ENCODE measurements at regions of chr5 and their contacts with region 1.

Region 1: DNA sequence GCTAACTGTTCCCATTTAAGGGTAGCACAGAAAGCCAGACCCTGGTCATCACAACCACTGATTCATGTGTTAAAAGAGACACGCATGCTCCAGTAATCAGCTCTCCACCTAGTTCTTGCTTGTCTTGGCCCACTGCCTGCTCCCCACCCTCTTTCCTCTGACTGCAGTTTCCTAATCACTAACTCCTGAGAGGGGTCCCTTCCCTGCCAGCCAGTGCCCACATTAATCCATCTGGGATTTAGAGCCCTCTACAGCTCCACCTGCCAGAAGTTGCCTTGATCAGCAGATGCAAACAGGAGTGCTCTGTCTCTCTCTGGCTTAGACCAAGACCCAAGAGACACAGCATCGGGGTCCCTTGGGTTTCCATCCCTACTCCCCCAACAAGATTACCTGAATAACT is 382.3 kb downstream of the TMEM167A start:
- DNase-seq: no peak
- H3K4me3 Mint-ChIP-seq: no peak overlapping the region
- H3K27ac Mint-ChIP-seq: no peak overlapping the region
- H3K4me1 Mint-ChIP-seq: no peaks in the 10 kb centered on the region
- H3K27me3 Mint-ChIP-seq: peaks cover 7% of the 10 kb centered on the region

Region 2: DNA sequence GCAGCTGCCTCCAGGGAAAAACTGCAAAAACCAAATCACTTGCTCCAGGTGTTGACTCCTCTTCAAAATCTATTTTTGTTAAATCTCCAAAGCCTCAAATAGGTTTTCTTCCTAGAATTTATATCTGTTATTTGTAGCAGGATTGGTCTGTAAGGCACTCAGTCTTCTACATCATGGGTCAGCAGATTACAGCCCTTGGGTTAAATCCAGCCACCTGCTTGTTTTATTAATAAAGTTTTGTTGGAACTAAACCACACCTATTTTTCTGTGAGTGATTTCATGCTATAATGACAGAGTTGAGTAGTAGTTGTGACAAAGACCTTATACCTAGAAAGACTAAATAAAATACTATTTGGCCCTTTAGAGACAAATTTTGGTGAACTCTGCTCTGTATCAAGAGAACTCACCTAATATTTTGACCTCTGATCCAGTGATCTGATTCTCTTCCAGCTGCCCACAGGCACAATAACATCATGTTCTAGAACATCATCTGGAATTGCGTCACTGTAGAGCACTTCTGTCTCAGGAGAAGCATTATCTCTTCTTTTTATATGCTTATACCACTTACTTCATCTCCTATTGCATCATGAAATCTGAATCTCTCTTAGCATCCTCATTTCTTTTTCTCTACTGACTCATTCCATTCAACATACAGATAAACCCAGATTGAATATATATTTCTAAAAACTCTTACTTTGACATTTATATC is 546.9 kb before region 1 on chr5:
- intact Hi-C with region 1: loop called (anchors 5 kb)
- DNase-seq: no peak
- H3K4me3 Mint-ChIP-seq: no peak overlapping the region
- H3K27ac Mint-ChIP-seq: no peak overlapping the region
- H3K4me1 Mint-ChIP-seq: no peaks in the 10 kb centered on the region
- H3K27me3 Mint-ChIP-seq: peaks cover 2% of the 10 kb centered on the region

Region 3: DNA sequence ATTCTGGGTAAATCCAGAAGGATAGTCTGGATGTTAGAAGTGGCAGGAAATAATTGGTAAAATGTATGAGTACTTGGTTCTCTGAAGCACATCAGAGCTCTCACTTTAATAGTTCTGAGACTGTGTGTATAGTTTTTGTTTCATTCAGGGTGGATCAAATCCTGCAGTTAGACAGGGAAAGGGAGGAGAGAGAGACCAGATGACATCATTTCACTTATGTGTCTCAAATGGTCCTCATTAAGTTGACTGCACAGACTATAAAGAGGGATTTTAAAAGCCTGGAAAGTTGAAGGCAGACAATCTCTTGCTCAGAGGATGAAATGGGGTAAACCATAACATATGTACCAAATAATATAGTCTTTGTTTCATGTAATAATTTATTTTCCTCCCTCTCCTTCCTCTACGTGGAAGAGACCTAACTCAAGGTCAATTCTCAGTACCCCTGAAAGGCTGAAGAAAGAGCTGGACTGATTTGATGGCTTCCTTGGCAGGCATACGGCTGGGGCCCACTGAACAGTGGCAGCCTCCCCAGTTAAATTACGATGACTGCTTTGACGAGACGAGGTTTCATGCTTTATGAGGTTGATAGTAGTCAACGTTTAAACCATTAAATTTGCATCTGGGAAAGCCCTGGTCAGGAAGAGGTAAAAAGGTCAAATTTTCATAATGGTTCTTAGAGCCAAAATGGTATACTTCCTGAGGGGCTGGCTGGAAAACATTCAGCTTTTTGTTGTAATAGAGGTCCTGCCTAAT is 21.7 kb before region 1 on chr5:
- intact Hi-C with region 1: no loop called
- DNase-seq: no peak
- H3K4me3 Mint-ChIP-seq: no peak overlapping the region
- H3K27ac Mint-ChIP-seq: no peak overlapping the region
- H3K4me1 Mint-ChIP-seq: peaks cover 67% of the 10 kb centered on the region
- H3K27me3 Mint-ChIP-seq: no peaks in the 10 kb centered on the region

Measured in activated T-helper 1 cell treated with anti-CD3 and anti-CD28 coated beads, Interleukin-12 subunit alpha, Interleukin-12 subunit beta, Interleukin-2, Interleukin-4 antibody, amounts not matched to agents 30 ng/mL and 10 ng/mL and 1 ng/mL, durations not matched to agents 14 hours and 24 hours and 36 hours (primary cell).